Tibial artery (tissue), 4 donors: ENCODE measurements at regions of chr1 and their contacts with region 1.

Region 1: GRCh38 chr1:55284852-55285251 is 69.7 kb upstream of the USP24 start:
- DNase-seq: peak in 1 of 2 donors; percentile 56
- H3K4me3 ChIP-seq: no peak overlapping the region
- H3K27ac ChIP-seq: no peak overlapping the region
- H3K4me1 ChIP-seq: peaks cover 0 to 9% (median 3%) of the 10 kb centered on the region in 4 donors
- H3K27me3 ChIP-seq: no peaks in the 10 kb centered on the region
- CTCF ChIP-seq: peak; percentile 44 to 66

Region 2: GRCh38 chr1:55443175-55443915 is 158.5 kb after region 1 on chr1:
- intact Hi-C with region 1: loop called (anchors 10 kb)
- DNase-seq: peak; percentile 97 to 98
- H3K4me3 ChIP-seq: no peak overlapping the region
- H3K27ac ChIP-seq: peak overlapping the region; percentile 82 to 86
- H3K4me1 ChIP-seq: peaks cover 0 to 49% (median 18%) of the 10 kb centered on the region in 4 donors
- H3K27me3 ChIP-seq: no peaks in the 10 kb centered on the region
- CTCF ChIP-seq: peak in 1 of 2 experiments; percentile 20

Region 3: GRCh38 chr1:56584910-56585528 is 1300.2 kb after region 1 on chr1:
- intact Hi-C with region 1: loop called (anchors 5 kb)
- DNase-seq: no peak
- H3K4me3 ChIP-seq: no peak overlapping the region
- H3K27ac ChIP-seq: peak overlapping the region in 1 of 2 donors; percentile 10
- H3K4me1 ChIP-seq: peaks cover 0 to 9% (median 4%) of the 10 kb centered on the region in 4 donors
- H3K27me3 ChIP-seq: no peaks in the 10 kb centered on the region
- CTCF ChIP-seq: peak; percentile 89

Region 4: GRCh38 chr1:56709269-56709880 is 1424.5 kb after region 1 on chr1:
- intact Hi-C with region 1: loop called (anchors 5 kb)
- DNase-seq: no peak
- H3K4me3 ChIP-seq: no peak overlapping the region
- H3K27ac ChIP-seq: no peak overlapping the region
- H3K4me1 ChIP-seq: no peaks in the 10 kb centered on the region
- H3K27me3 ChIP-seq: no peaks in the 10 kb centered on the region
- CTCF ChIP-seq: peak; percentile 45 to 56